Activated B cell treated with CpG ODN at 0.5 μM for 24 hours (primary cell): ENCODE measurements at regions of chr2 and their contacts with region 1.

Region 1: DNA sequence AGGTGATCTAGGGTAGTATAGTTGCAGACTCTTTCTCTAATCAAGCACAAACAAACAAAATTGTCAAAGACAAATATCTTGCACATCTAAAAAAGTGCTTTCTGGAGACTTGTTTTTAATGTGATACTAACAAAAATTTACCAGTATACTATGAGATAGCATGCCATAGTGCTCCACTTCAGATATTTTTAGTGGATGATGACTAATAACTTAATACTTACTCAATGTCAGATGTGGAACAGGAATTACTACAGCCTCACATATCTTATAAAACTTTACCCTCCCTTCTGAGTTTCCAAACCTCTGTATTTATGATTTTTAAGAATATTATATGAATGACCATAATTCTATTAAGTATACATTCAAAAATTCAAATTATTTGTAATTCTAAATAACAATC is 1162.0 kb upstream of the SLC39A10 start:
- DNase-seq: no peak
- ATAC-seq: no peak
- H3K4me3 Mint-ChIP-seq: no peak overlapping the region
- H3K27ac Mint-ChIP-seq: no peak overlapping the region
- H3K4me1 Mint-ChIP-seq: no peaks in the 10 kb centered on the region
- H3K27me3 Mint-ChIP-seq: no peaks in the 10 kb centered on the region
- CTCF ChIP-seq: no peak

Region 2: DNA sequence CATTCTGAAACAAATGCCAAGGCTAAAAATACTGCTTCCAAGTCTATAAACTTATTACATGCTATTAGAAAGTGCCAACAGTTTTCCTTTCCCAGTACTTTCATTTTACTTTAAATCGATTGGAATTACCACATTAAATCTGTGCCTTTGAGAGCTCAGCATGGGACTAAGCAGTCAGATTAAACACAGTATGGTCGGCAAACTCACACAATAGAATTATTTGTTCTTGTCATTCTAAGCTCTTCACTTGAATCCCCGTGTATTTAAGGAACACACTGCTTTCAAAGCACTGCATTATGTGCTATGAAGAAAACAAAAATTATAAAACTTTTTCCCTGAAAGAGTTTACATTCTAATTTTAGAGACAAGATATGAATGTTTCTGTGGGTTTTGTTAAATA is 717.5 kb after region 1 on chr2:
- CTCF ChIA-PET with region 1: no interaction called
- POLR2A ChIA-PET with region 1: no interaction called
- intact Hi-C with region 1: no loop called
- DNase-seq: no peak
- ATAC-seq: no peak
- H3K4me3 Mint-ChIP-seq: no peak overlapping the region
- H3K27ac Mint-ChIP-seq: no peak overlapping the region
- H3K4me1 Mint-ChIP-seq: no peaks in the 10 kb centered on the region
- H3K27me3 Mint-ChIP-seq: peaks cover 2% of the 10 kb centered on the region
- CTCF ChIP-seq: no peak

Region 3: DNA sequence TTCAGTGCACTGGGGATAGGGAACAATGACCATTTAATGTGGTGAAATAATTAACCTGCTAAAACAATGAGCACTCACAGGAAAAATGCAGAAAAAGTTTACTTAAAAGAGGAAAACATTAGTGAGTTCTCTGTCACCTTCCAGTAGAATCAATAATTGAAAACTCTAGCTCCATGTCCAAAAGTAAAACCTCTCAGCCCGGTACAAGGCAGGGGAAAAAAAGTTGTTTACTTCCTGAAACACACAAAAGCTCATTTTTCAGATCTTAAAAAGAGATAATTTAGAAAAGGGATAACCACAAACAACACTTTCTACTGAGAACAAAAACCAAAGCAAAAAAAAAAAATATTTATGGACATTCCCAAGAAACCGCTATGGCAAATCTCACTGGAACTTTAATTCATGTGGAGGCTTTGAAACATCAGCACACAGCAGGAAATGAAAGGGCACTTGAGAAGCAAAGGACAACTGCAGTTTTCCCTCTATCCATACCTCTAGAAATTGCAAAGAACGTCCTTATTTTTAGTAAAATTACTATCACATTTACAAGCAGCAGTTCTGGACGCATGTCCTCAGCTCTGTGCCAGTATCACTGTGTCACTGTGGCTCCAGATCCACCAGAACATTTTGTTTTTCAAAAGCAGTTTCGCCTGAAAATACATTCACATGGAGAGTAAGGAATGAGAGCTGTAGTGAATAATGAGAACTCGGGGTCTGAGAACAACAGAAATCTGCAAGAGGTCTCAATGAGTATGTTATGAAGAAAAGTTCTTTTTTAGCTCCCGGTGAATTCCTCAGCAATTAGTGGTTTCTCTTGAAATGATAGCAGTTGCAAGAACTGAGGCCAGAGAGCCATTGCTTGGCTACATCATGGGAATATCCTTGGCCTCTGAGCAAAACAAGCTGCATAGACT is 1618.3 kb after region 1 on chr2:
- CTCF ChIA-PET with region 1: no interaction called
- POLR2A ChIA-PET with region 1: no interaction called
- intact Hi-C with region 1: loop called (anchors 5 kb)
- DNase-seq: no peak
- ATAC-seq: no peak
- H3K4me3 Mint-ChIP-seq: no peak overlapping the region
- H3K27ac Mint-ChIP-seq: no peak overlapping the region
- H3K4me1 Mint-ChIP-seq: peaks cover 22% of the 10 kb centered on the region
- H3K27me3 Mint-ChIP-seq: no peaks in the 10 kb centered on the region
- CTCF ChIP-seq: no peak